ENCODE measurements at regions of chr17 and their contacts with region 1.

Region 1: GRCh38 chr17:48944519-48945260 is at the start of gene SNF8:
- DNase-seq: peak; percentile 75 to 98
- H3K4me3 ChIP-seq: peak within 1 kb of the TSS; percentile 64 to 93 (median 88)
- H3K27ac ChIP-seq: peak within 1 kb of the TSS; percentile 95
- H3K4me1 ChIP-seq: peaks cover 3 to 7% (median 4%) of the 10 kb centered on the region in 4 experiments; a peak in 4 of 7 replicates
- H3K27me3 ChIP-seq: no peaks in the 10 kb centered on the region
- CTCF ChIP-seq: no peak
- EP300 ChIP-seq: peak in 1 of 2 experiments; percentile 11; a peak in 1 of 3 replicates
- POLR2A ChIP-seq: peak; percentile 84 to 98
- RAD21 ChIP-seq: peak in 1 of 2 experiments; percentile 3; a peak in 1 of 4 replicates
- total RNA-seq, gene SNF8: 130 and 133 TPM in 2 replicates

Region 2: DNA sequence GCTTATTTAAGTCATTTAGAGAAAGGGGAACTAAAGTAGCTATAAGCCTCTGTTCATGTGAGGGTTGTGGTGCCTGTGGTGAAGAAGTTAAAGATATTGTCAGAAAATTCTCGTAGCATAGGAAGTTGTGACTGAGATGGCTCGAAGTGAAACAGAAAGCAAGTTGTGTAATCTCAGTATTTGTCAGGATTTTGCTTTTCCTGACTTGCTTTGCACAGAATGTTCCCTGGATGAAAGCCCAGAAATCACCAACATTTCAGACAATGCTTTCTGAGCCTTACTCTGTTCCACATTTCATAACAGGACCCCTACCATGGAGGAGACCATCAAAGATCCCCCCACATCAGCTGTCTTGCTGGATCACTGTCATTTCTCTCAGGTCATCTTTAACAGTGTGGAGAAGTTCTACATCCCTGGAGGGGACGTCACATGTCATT is 103.3 kb before region 1 on chr17:
- CTCF ChIA-PET with region 1: no interaction called
- POLR2A ChIA-PET with region 1: no interaction called
- DNase-seq: no peak
- H3K4me3 ChIP-seq: no peak overlapping the region
- H3K27ac ChIP-seq: no peak overlapping the region
- H3K4me1 ChIP-seq: no peaks in the 10 kb centered on the region
- H3K27me3 ChIP-seq: no peaks in the 10 kb centered on the region
- CTCF ChIP-seq: no peak
- EP300 ChIP-seq: no peak
- POLR2A ChIP-seq: no peak
- RAD21 ChIP-seq: no peak

Region 3: DNA sequence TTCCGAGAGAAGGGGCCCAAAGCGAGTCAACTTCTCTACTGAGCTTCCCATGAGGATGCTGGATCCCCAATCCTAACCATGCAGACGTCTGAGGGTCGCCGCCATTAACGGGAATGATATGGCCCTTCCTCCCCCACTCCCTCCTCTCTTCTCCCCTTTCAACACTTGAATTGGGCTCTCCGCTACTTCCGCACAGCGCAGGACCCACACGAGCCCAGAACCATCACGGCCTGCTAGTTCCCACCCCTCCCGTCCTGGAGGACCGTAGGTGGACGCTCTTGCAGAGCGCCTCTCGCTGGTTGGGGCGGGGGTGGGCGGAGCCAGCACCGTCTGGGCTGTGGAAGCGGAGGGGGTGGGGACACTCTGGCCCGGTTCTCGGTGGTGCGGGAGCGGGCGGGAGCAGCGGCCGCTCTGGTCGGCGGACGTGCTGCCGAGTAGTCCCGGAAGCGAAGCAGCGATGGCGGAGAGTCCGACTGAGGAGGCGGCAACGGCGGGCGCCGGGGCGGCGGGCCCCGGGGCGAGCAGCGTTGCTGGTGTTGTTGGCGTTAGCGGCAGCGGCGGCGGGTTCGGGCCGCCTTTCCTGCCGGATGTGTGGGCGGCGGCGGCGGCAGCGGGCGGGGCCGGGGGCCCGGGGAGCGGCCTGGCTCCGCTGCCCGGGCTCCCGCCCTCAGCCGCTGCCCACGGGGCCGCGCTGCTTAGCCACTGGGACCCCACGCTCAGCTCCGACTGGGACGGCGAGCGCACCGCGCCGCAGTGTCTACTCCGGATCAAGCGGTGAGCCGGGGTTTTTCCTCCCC is 36.4 kb before region 1 on chr17 and contains the start of gene UBE2Z:
- CTCF ChIA-PET with region 1: no interaction called
- POLR2A ChIA-PET with region 1: interaction called, 16 read pairs
- DNase-seq: peak; percentile 88 to 94
- H3K4me3 ChIP-seq: peak within 1 kb of the TSS; percentile 74 to 97 (median 80)
- H3K27ac ChIP-seq: peak within 1 kb of the TSS; percentile 89
- H3K4me1 ChIP-seq: peaks cover 5 to 17% (median 6%) of the 10 kb centered on the region in 4 experiments
- H3K27me3 ChIP-seq: no peaks in the 10 kb centered on the region
- CTCF ChIP-seq: peak; percentile 31 to 52 (median 39)
- EP300 ChIP-seq: no peak
- POLR2A ChIP-seq: peak; percentile 84 to 90
- RAD21 ChIP-seq: 0 out of 4 replicates have a peak, but pooled peaks of 1 of the 2 experiments have one; percentile 5
- total RNA-seq, gene UBE2Z: 75.3 and 75.9 TPM in 2 replicates

Region 4: GRCh38 chr17:49022391-49022941 is 77.8 kb after region 1 on chr17:
- CTCF ChIA-PET with region 1: interaction called, 3 read pairs
- POLR2A ChIA-PET with region 1: interaction called, 10 read pairs
- DNase-seq: peak; percentile 80 to 92
- H3K4me3 ChIP-seq: peak overlapping the region in 3 of 4 experiments; percentile 12 to 44 (median 26); a peak in 4 of 8 replicates
- H3K27ac ChIP-seq: peak overlapping the region; percentile 90
- H3K4me1 ChIP-seq: peaks cover 19 to 45% (median 34%) of the 10 kb centered on the region in 4 experiments
- H3K27me3 ChIP-seq: no peaks in the 10 kb centered on the region
- CTCF ChIP-seq: no peak
- EP300 ChIP-seq: peak in 1 of 2 experiments; percentile 91; a peak in 1 of 3 replicates
- POLR2A ChIP-seq: no peak; a peak in 1 of 3 replicates
- RAD21 ChIP-seq: peak in 1 of 2 experiments; percentile 7; a peak in 1 of 4 replicates

Region 5: GRCh38 chr17:49053171-49053829 is 108.6 kb after region 1 on chr17:
- CTCF ChIA-PET with region 1: no interaction called
- POLR2A ChIA-PET with region 1: interaction called, 10 read pairs
- DNase-seq: peak in 1 of 2 experiments; percentile 55
- H3K4me3 ChIP-seq: no peak overlapping the region
- H3K27ac ChIP-seq: no peak overlapping the region
- H3K4me1 ChIP-seq: peaks cover 10 to 23% (median 19%) of the 10 kb centered on the region in 4 experiments
- H3K27me3 ChIP-seq: no peaks in the 10 kb centered on the region
- CTCF ChIP-seq: no peak
- EP300 ChIP-seq: no peak
- POLR2A ChIP-seq: peak; percentile 34 to 58; a peak in 2 of 3 replicates
- RAD21 ChIP-seq: peak in 1 of 2 experiments; percentile 22; a peak in 1 of 4 replicates

Measured in H1 (cell line).